ENCODE measurements at regions of chr15 and their contacts with region 1.

Region 1: DNA sequence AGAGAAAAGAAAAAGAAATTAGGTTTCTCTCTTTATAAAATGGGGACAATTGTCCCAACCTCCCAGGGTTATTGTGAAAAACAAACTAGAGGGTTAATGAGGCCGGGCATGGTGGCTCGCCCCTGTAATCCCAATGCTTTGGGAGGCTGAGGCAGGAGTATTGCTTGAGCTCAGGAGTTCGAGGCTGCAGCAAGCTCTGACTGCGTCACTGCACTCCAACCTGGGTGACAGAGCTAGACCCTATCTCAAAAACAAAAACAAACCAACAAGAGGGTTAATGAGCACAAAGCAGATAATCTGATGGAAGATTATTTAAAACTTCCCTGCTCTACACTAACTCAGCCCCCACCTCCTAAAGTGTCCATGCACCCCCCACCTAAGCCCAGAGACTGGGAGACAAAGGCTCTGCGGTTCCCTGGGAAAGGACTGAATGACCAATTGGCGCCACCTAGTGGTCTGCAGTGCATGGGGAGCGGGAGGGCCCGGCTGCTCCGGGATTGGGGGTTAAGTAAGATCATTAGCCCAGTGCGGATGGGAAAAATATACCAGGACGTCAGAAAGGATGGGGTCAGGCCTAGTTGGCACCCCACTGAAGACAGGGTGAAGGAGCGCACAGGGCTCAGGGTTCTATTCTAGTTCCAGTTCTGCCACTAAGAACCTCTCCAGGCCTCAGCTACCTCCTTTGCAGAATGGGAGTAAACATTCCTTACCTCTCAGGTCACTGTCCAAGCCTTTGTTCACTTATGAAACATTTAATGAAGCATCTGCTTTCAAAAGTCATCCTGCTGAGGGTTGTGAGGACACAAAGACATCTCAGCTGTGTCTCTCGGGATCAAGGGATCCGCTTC is 15.6 kb downstream of the PIF1 start:
- DNase-seq: peak; percentile 78 to 98
- ATAC-seq: peak; percentile 85 to 95
- H3K4me3 ChIP-seq: no peak overlapping the region
- H3K27ac ChIP-seq: no peak overlapping the region
- H3K4me1 ChIP-seq: 0 out of 3 replicates have a peak, but pooled peaks cover 3% of the 10 kb centered on the region
- CTCF ChIP-seq: peak; percentile 99
- EP300 ChIP-seq: no peak
- POLR2A ChIP-seq: no peak
- RAD21 ChIP-seq: peak; percentile 95 to 98

Region 2: GRCh38 chr15:64667736-64668161 is 142.1 kb before region 1 on chr15:
- CTCF ChIA-PET with region 1: no interaction called
- POLR2A ChIA-PET with region 1: no interaction called
- DNase-seq: no peak
- ATAC-seq: peak in 1 of 2 experiments; percentile 51; a peak in 3 of 6 replicates
- H3K4me3 ChIP-seq: no peak overlapping the region
- H3K27ac ChIP-seq: peak overlapping the region in 1 of 2 experiments; percentile 10; a peak in 1 of 6 replicates
- H3K4me1 ChIP-seq: peaks cover 26% of the 10 kb centered on the region
- CTCF ChIP-seq: no peak
- EP300 ChIP-seq: no peak
- POLR2A ChIP-seq: no peak
- RAD21 ChIP-seq: no peak

Region 3: DNA sequence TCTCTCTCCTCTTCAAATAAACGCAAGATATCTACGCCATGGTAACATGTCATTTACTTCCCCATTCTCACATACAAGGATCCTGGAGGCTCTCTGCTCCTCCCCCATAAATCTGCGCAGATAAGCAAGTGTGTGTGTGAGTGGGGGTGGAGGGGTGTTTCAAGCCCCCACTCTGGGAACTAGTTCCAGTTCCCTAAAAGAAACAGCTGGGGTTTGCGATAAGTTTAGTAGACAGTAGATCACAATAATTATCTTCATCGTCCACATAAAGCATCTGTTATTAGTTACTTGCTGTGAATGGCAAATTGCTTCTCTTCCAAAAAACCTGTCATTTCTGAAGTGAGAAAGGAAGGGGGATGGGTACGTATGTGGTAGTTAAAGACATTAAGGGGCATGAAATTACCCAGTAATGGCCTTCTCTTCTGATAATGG is 114.3 kb before region 1 on chr15:
- CTCF ChIA-PET with region 1: interaction called, 11 read pairs
- POLR2A ChIA-PET with region 1: no interaction called
- DNase-seq: no peak
- ATAC-seq: no peak
- H3K4me3 ChIP-seq: no peak overlapping the region
- H3K27ac ChIP-seq: no peak overlapping the region
- H3K4me1 ChIP-seq: peaks cover 49% of the 10 kb centered on the region
- CTCF ChIP-seq: no peak
- EP300 ChIP-seq: no peak
- POLR2A ChIP-seq: no peak
- RAD21 ChIP-seq: no peak

Region 4: GRCh38 chr15:64717735-64718495 is 92.0 kb before region 1 on chr15:
- CTCF ChIA-PET with region 1: interaction called, 27 read pairs
- POLR2A ChIA-PET with region 1: no interaction called
- DNase-seq: no peak
- ATAC-seq: 0 out of 6 replicates have a peak, but pooled peaks have one; percentile 20 to 21
- H3K4me3 ChIP-seq: no peak overlapping the region
- H3K27ac ChIP-seq: no peak overlapping the region
- H3K4me1 ChIP-seq: 0 out of 3 replicates have a peak, but pooled peaks cover 3% of the 10 kb centered on the region
- CTCF ChIP-seq: no peak
- EP300 ChIP-seq: no peak
- POLR2A ChIP-seq: no peak
- RAD21 ChIP-seq: no peak

Region 5: GRCh38 chr15:64761156-64761555 is 48.7 kb before region 1 on chr15:
- CTCF ChIA-PET with region 1: interaction called, 20 read pairs
- POLR2A ChIA-PET with region 1: no interaction called
- DNase-seq: no peak
- ATAC-seq: no peak
- H3K4me3 ChIP-seq: no peak overlapping the region
- H3K27ac ChIP-seq: no peak overlapping the region
- H3K4me1 ChIP-seq: no peaks in the 10 kb centered on the region
- CTCF ChIP-seq: no peak
- EP300 ChIP-seq: no peak
- POLR2A ChIP-seq: no peak
- RAD21 ChIP-seq: no peak

Region 6: DNA sequence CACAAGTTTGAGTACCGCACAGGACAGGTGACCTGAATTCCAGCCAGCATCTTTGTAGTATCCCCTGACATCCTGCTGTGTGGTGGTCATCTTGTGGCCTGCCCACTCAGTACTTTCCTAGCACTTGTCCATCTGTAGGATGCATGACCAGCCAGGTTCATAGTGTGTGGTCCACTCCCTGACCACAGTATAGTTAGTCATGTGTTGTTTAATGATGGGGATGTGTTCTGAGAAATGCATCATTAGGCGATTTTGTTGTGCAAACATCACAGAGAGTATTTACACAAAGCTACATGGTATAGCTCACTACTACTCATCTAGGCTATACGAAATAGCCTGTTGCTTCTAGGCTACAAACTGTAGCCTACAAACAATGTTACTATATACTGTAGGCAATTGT is 17.6 kb before region 1 on chr15:
- CTCF ChIA-PET with region 1: interaction called, 35 read pairs
- POLR2A ChIA-PET with region 1: no interaction called
- DNase-seq: peak in 1 of 2 experiments; percentile 26
- ATAC-seq: peak; percentile 62 to 70; a peak in 5 of 6 replicates
- H3K4me3 ChIP-seq: no peak overlapping the region
- H3K27ac ChIP-seq: no peak overlapping the region
- H3K4me1 ChIP-seq: 0 out of 3 replicates have a peak, but pooled peaks cover 2% of the 10 kb centered on the region
- CTCF ChIP-seq: no peak
- EP300 ChIP-seq: no peak
- POLR2A ChIP-seq: no peak
- RAD21 ChIP-seq: no peak

Region 7: GRCh38 chr15:64836023-64836536 is 26.2 kb after region 1 on chr15:
- CTCF ChIA-PET with region 1: interaction called, 27 read pairs
- POLR2A ChIA-PET with region 1: no interaction called
- DNase-seq: no peak
- ATAC-seq: peak; percentile 17; a peak in 4 of 6 replicates
- H3K4me3 ChIP-seq: no peak overlapping the region
- H3K27ac ChIP-seq: peak overlapping the region; percentile 8 to 61; a peak in 4 of 6 replicates
- H3K4me1 ChIP-seq: peaks cover 15% of the 10 kb centered on the region
- CTCF ChIP-seq: no peak; the same call in 2 of the 3 replicates
- EP300 ChIP-seq: no peak
- POLR2A ChIP-seq: no peak
- RAD21 ChIP-seq: no peak

Region 8: GRCh38 chr15:64856429-64857145 is 46.7 kb after region 1 on chr15:
- CTCF ChIA-PET with region 1: interaction called, 13 read pairs
- POLR2A ChIA-PET with region 1: no interaction called
- DNase-seq: peak in 1 of 2 experiments; percentile 38
- ATAC-seq: peak in 1 of 2 experiments; percentile 63; a peak in 3 of 6 replicates
- H3K4me3 ChIP-seq: no peak overlapping the region
- H3K27ac ChIP-seq: peak overlapping the region; percentile 31 to 63; a peak in 4 of 6 replicates
- H3K4me1 ChIP-seq: peaks cover 30% of the 10 kb centered on the region
- CTCF ChIP-seq: no peak
- EP300 ChIP-seq: no peak
- POLR2A ChIP-seq: no peak
- RAD21 ChIP-seq: no peak

Region 9: GRCh38 chr15:64934023-64934422 is 124.2 kb after region 1 on chr15:
- CTCF ChIA-PET with region 1: no interaction called
- POLR2A ChIA-PET with region 1: no interaction called
- DNase-seq: no peak
- ATAC-seq: no peak
- H3K4me3 ChIP-seq: no peak overlapping the region
- H3K27ac ChIP-seq: no peak overlapping the region
- H3K4me1 ChIP-seq: peaks cover 7% of the 10 kb centered on the region; the same call in 2 of the 3 replicates
- CTCF ChIP-seq: no peak
- EP300 ChIP-seq: no peak
- POLR2A ChIP-seq: no peak
- RAD21 ChIP-seq: no peak

Region 10: DNA sequence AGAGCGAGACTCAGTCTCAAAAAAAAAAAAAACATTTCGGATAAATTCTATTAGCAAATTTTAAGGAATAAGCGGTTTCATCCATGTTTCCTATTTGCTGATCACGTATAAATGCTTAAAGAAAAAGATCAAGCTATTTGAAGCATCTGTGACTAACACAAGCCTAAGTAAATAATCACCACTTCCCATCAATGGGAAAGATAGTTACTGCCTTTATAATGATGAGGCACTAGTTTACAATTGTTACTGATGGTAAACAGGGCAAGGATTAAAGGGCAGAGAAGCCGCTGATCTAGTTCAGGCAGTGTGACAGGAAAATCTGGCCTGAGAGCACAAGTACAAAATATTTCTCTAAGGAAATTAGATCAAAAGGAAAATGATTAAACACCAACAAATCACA is 361.6 kb after region 1 on chr15:
- CTCF ChIA-PET with region 1: no interaction called
- POLR2A ChIA-PET with region 1: no interaction called
- DNase-seq: peak in 1 of 2 experiments; percentile 39
- ATAC-seq: no peak
- H3K4me3 ChIP-seq: no peak overlapping the region
- H3K27ac ChIP-seq: no peak overlapping the region
- H3K4me1 ChIP-seq: peaks cover 41% of the 10 kb centered on the region
- CTCF ChIP-seq: no peak
- EP300 ChIP-seq: no peak
- POLR2A ChIP-seq: no peak
- RAD21 ChIP-seq: no peak